ENCODE measurements at regions of chr5 and their contacts with region 1.

Region 1: GRCh38 chr5:33997331-33997983 is 10.4 kb downstream of the AMACR start:
- DNase-seq: peak; percentile 49
- H3K4me3 Mint-ChIP-seq: no peak overlapping the region
- H3K27ac Mint-ChIP-seq: no peak overlapping the region
- H3K4me1 Mint-ChIP-seq: no peaks in the 10 kb centered on the region
- H3K27me3 Mint-ChIP-seq: no peaks in the 10 kb centered on the region
- CTCF ChIP-seq: peak; percentile 40

Region 2: DNA sequence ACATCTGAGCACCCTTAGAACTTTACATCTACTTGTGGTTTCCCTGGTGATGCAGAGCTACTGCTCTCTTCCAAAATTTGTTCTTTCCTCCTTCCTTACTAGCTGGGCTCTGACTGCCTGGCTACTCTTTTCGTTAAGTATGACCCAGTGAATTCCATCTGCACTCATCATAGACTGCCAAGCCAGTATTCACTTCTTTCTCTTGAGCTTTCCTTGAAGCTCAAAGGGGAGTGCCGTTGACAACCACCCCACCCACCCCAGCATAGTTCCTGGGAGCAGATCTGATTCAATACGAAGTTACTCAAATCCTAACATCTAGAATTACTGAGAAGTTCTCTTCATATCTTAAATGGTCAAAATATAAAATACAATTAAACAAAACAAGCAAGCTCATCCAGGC is 296.2 kb before region 1 on chr5:
- CTCF ChIA-PET with region 1: no interaction called
- intact Hi-C with region 1: no loop called
- DNase-seq: no peak
- H3K4me3 Mint-ChIP-seq: no peak overlapping the region
- H3K27ac Mint-ChIP-seq: no peak overlapping the region
- H3K4me1 Mint-ChIP-seq: no peaks in the 10 kb centered on the region
- H3K27me3 Mint-ChIP-seq: no peaks in the 10 kb centered on the region
- CTCF ChIP-seq: no peak

Region 3: DNA sequence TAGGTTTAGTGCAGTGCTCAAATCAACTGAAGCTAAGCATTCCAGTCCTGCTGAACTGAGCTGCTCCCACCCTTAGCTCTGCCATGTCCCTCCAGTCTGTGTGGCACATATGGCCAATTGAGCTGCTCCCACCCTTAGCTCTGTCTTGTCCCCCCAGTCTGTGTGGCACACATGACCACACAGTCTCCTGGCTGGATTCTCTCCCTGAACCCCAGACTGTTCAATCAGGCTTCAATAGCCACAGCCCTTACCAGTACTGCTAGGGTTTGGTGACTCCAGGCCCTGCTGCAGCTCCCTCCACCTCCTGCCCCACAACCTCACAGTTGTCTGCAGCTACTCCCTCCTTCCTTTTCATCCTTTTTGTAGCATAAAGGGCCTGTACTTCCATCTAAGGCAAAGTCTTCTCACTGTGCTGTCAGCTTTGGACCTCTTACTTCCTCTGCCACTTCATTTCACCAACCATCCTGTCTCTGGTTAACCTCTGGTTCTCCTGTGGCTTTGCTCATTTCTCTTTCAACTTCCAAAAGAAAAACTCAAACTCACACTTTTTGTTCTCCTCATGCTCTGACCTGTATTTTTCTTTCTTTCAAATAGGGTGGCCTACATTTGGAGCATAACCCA is 156.4 kb before region 1 on chr5:
- CTCF ChIA-PET with region 1: no interaction called
- intact Hi-C with region 1: no loop called
- DNase-seq: no peak
- H3K4me3 Mint-ChIP-seq: no peak overlapping the region
- H3K27ac Mint-ChIP-seq: no peak overlapping the region
- H3K4me1 Mint-ChIP-seq: no peaks in the 10 kb centered on the region
- H3K27me3 Mint-ChIP-seq: no peaks in the 10 kb centered on the region
- CTCF ChIP-seq: no peak

Region 4: DNA sequence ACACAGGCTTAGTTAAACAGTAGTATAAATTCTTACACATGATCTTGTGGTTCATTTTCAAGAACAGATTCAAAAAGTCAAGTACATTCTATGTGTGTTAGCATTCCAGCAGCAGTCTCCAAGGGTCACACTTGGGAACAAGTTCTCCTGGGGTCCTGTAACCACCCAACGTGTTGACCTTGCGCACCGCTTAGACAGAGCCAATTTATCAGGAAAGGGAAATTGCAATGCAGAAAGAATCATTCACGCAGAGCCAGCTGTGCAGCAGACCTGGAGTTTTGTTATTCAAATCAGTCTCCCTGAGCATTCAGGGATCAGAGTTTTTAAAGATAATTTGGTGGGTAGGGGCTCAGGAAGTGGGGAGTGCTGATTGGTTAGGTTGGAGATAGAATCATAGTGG is 69.8 kb before region 1 on chr5:
- CTCF ChIA-PET with region 1: no interaction called
- intact Hi-C with region 1: no loop called
- DNase-seq: no peak
- H3K4me3 Mint-ChIP-seq: no peak overlapping the region
- H3K27ac Mint-ChIP-seq: no peak overlapping the region
- H3K4me1 Mint-ChIP-seq: peaks cover 11% of the 10 kb centered on the region
- H3K27me3 Mint-ChIP-seq: peaks cover 22% of the 10 kb centered on the region
- CTCF ChIP-seq: no peak

Region 5: GRCh38 chr5:33981408-33982162 is 15.9 kb before region 1 on chr5:
- CTCF ChIA-PET with region 1: no interaction called
- intact Hi-C with region 1: no loop called
- DNase-seq: no peak
- H3K4me3 Mint-ChIP-seq: no peak overlapping the region
- H3K27ac Mint-ChIP-seq: no peak overlapping the region
- H3K4me1 Mint-ChIP-seq: no peaks in the 10 kb centered on the region
- H3K27me3 Mint-ChIP-seq: no peaks in the 10 kb centered on the region
- CTCF ChIP-seq: no peak

Region 6: GRCh38 chr5:34452170-34452830 is 454.8 kb after region 1 on chr5:
- CTCF ChIA-PET with region 1: no interaction called
- intact Hi-C with region 1: loop called (anchors 5 kb)
- DNase-seq: peak; percentile 29
- H3K4me3 Mint-ChIP-seq: no peak overlapping the region
- H3K27ac Mint-ChIP-seq: no peak overlapping the region
- H3K4me1 Mint-ChIP-seq: peaks cover 19% of the 10 kb centered on the region
- H3K27me3 Mint-ChIP-seq: no peaks in the 10 kb centered on the region
- CTCF ChIP-seq: peak; percentile 56

Region 7: DNA sequence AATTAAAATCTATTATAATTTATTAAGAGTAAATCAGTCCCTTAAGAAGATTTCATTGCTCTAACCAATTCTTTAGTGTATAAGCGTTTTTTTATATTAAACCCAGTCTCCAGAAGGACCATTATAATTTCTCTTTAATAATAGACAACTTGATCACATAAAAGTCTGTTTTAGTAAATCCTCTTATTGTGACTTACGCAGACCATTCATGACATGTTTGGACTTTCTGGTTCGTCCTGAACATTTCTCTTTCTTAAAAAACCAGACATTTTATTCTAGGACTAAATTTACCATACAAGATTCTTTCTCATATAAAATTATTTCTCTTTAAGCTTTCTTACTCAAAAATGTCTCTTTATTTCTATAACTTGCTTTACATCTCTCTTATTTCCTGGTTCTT is 462.5 kb after region 1 on chr5:
- CTCF ChIA-PET with region 1: no interaction called
- intact Hi-C with region 1: loop called (anchors 2 kb)
- DNase-seq: no peak
- H3K4me3 Mint-ChIP-seq: no peak overlapping the region
- H3K27ac Mint-ChIP-seq: no peak overlapping the region
- H3K4me1 Mint-ChIP-seq: peaks cover 6% of the 10 kb centered on the region
- H3K27me3 Mint-ChIP-seq: no peaks in the 10 kb centered on the region
- CTCF ChIP-seq: no peak

Measured in Calu3 (cell line).